ENCODE measurements at regions of chr15 and their contacts with region 1.

Region 1: DNA sequence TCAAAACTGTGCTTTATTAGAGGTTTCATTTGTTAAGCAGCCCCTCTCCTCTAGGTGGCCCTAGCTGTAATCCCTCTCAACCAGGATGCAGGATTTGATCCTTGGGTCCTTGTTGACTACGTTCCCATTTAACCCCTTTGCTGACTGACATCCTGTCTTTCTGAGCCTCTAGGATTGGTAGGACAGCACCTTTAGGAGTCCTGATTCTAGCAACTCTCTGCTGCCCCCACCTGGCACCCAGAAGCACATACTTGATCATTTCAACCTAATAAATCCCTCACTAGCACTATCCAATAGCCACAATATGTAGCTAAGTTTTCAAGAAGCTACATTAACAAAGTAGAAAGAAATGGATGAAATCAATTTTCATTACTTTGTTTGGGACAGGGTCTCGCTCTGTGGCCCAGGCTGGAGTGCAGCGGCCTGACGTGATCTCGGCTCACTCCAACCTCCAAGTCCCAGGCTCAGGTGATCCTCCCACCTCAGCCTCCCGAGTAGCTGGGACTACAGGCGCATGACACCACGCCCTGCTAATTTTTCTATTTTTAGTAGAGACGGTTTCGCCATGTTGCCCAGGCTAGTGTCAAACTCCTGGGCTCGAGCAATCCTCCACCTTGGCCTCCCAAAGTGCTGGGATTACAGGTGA is 28.3 kb downstream of the RSL24D1 start:
- DNase-seq: peak in 4 of 5 donors; percentile 18 to 50 (median 34)
- ATAC-seq: peak in 3 of 4 donors; percentile 50 to 56 (median 50)
- H3K4me3 ChIP-seq: no peak overlapping the region
- H3K27ac ChIP-seq: no peak overlapping the region
- H3K4me1 ChIP-seq: no peaks in the 10 kb centered on the region
- H3K27me3 ChIP-seq: no peaks in the 10 kb centered on the region
- CTCF ChIP-seq: peak; percentile 48 to 77 (median 65)
- POLR2A ChIP-seq: no peak

Region 2: GRCh38 chr15:53962332-53963241 is 1205.9 kb before region 1 on chr15:
- intact Hi-C with region 1: loop called in 2 of 10 experiments (anchors 5 kb)
- DNase-seq: no peak
- ATAC-seq: no peak
- H3K4me3 ChIP-seq: no peak overlapping the region
- H3K27ac ChIP-seq: no peak overlapping the region
- H3K4me1 ChIP-seq: no peaks in the 10 kb centered on the region
- H3K27me3 ChIP-seq: no peaks in the 10 kb centered on the region
- CTCF ChIP-seq: peak in 10 of 12 donors; percentile 22 to 55 (median 41)
- POLR2A ChIP-seq: no peak

Region 3: DNA sequence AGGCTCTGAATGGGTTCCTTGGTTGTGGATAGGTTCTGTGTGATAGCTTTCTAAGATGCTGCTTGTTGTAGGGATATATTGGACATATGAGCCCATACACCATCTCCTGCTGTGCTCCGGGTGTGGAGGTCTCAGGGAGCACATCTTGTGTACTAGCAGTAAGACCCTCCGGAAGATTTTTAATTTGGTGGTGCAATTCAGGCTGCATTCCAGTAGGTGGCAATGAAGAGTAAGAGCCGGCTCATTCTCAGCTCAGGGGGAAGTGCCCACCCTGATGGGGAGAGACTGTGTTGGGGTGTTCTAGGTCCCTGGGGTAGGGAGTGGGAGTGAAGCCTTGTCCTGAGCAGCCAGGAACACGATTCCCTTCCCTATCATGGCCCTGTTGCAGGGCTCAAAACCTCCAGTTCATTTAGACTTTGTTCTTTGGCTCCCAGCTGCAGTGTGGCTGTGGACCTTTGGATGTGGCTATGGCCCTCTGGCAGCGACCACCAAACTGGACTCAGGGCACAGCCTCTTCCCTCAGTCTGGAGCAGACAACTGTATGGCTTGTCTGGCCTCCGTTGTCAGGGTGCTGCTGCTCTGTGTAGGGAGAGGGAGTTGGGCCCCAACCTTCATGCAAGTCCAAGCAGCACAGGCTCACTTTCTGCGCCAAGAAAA is 1085.5 kb before region 1 on chr15:
- intact Hi-C with region 1: loop called in 1 of 10 experiments (anchors 5 kb)
- DNase-seq: no peak
- ATAC-seq: no peak
- H3K4me3 ChIP-seq: no peak overlapping the region
- H3K27ac ChIP-seq: no peak overlapping the region
- H3K4me1 ChIP-seq: no peaks in the 10 kb centered on the region
- H3K27me3 ChIP-seq: peaks cover 0 to 11% (median 0%) of the 10 kb centered on the region in 9 donors
- CTCF ChIP-seq: peak; percentile 19 to 62 (median 50)
- POLR2A ChIP-seq: no peak

Region 4: DNA sequence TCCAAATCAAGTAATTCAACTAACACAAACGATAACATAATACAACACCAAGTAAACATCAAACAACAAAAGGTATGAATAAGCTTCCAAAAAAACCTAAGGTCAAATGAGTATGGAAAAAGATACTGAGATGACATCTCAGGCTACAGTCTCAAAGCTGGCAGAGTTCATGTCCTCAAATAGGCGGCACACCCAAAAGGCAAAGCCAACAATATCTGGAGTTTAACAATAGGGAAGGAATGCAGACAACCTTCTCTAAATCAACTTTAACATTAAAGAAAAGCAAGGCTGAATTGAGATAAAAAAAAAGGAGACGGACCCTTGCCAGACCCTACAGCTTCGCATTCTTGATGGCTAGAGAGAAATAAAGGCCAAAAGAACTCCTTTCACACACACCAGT is 318.3 kb before region 1 on chr15:
- intact Hi-C with region 1: no loop called
- DNase-seq: no peak
- ATAC-seq: no peak
- H3K4me3 ChIP-seq: no peak overlapping the region
- H3K27ac ChIP-seq: no peak overlapping the region
- H3K4me1 ChIP-seq: no peaks in the 10 kb centered on the region
- H3K27me3 ChIP-seq: no peaks in the 10 kb centered on the region
- CTCF ChIP-seq: no peak
- POLR2A ChIP-seq: no peak

Region 5: GRCh38 chr15:55221090-55222011 is 52.9 kb after region 1 on chr15:
- intact Hi-C with region 1: no loop called
- DNase-seq: no peak
- ATAC-seq: peak; percentile 21 to 88 (median 67)
- H3K4me3 ChIP-seq: peak overlapping the region in 1 of 12 donors; percentile 10
- H3K27ac ChIP-seq: peak overlapping the region in 2 of 12 donors; percentile 13 to 87
- H3K4me1 ChIP-seq: peaks cover 0 to 76% (median 0%) of the 10 kb centered on the region in 12 donors
- H3K27me3 ChIP-seq: no peaks in the 10 kb centered on the region
- CTCF ChIP-seq: no peak
- POLR2A ChIP-seq: no peak